CD4-positive, alpha-beta T cell (primary cell): ENCODE measurements at regions of chr5 and their contacts with region 1.

Region 1: GRCh38 chr5:170338933-170339779 is 41.6 kb upstream of the LCP2 start:
- DNase-seq: peak; percentile 49 to 88 (median 66)
- ATAC-seq: peak; percentile 81
- H3K4me3 ChIP-seq: no peak overlapping the region
- H3K4me3 Mint-ChIP-seq: no peak overlapping the region
- H3K27ac ChIP-seq: no peak overlapping the region
- H3K27ac Mint-ChIP-seq: no peak overlapping the region
- H3K4me1 ChIP-seq: peaks cover 50% of the 10 kb centered on the region
- H3K4me1 Mint-ChIP-seq: peaks cover 40% of the 10 kb centered on the region
- H3K27me3 ChIP-seq: no peaks in the 10 kb centered on the region
- H3K27me3 Mint-ChIP-seq: no peaks in the 10 kb centered on the region
- CTCF ChIP-seq: peak; percentile 98

Region 2: GRCh38 chr5:170100066-170100943 is 238.9 kb before region 1 on chr5:
- CTCF ChIA-PET with region 1: no interaction called
- POLR2A ChIA-PET with region 1: no interaction called
- intact Hi-C with region 1: loop called (anchors 1 to 2 kb)
- DNase-seq: peak; percentile 48 to 79 (median 60)
- ATAC-seq: peak; percentile 56
- H3K4me3 ChIP-seq: no peak overlapping the region
- H3K4me3 Mint-ChIP-seq: no peak overlapping the region
- H3K27ac ChIP-seq: no peak overlapping the region
- H3K27ac Mint-ChIP-seq: no peak overlapping the region
- H3K4me1 ChIP-seq: peaks cover 2% of the 10 kb centered on the region
- H3K4me1 Mint-ChIP-seq: no peaks in the 10 kb centered on the region
- H3K27me3 ChIP-seq: no peaks in the 10 kb centered on the region
- H3K27me3 Mint-ChIP-seq: peaks cover 20% of the 10 kb centered on the region
- CTCF ChIP-seq: peak; percentile 67

Region 3: GRCh38 chr5:170238456-170239196 is 100.5 kb before region 1 on chr5:
- CTCF ChIA-PET with region 1: interaction called, 10 read pairs
- POLR2A ChIA-PET with region 1: interaction called, 5 read pairs
- intact Hi-C with region 1: no loop called
- DNase-seq: no peak
- ATAC-seq: no peak
- H3K4me3 ChIP-seq: no peak overlapping the region
- H3K4me3 Mint-ChIP-seq: no peak overlapping the region
- H3K27ac ChIP-seq: no peak overlapping the region
- H3K27ac Mint-ChIP-seq: peak overlapping the region; percentile 1
- H3K4me1 ChIP-seq: no peaks in the 10 kb centered on the region
- H3K4me1 Mint-ChIP-seq: peaks cover 5% of the 10 kb centered on the region
- H3K27me3 ChIP-seq: no peaks in the 10 kb centered on the region
- H3K27me3 Mint-ChIP-seq: no peaks in the 10 kb centered on the region
- CTCF ChIP-seq: no peak

Region 4: GRCh38 chr5:170267431-170268152 is 71.6 kb before region 1 on chr5:
- CTCF ChIA-PET with region 1: interaction called, 73 read pairs
- POLR2A ChIA-PET with region 1: interaction called, 174 read pairs
- intact Hi-C with region 1: loop called in 1 of 2 experiments (anchors 1 kb)
- DNase-seq: peak; percentile 71 to 93 (median 78)
- ATAC-seq: peak; percentile 75
- H3K4me3 ChIP-seq: peak overlapping the region; percentile 8
- H3K4me3 Mint-ChIP-seq: peak overlapping the region; percentile 70
- H3K27ac ChIP-seq: peak overlapping the region; percentile 77 to 82
- H3K27ac Mint-ChIP-seq: peak overlapping the region; percentile 96
- H3K4me1 ChIP-seq: peaks cover 84% of the 10 kb centered on the region
- H3K4me1 Mint-ChIP-seq: peaks cover 93% of the 10 kb centered on the region
- H3K27me3 ChIP-seq: no peaks in the 10 kb centered on the region
- H3K27me3 Mint-ChIP-seq: no peaks in the 10 kb centered on the region
- CTCF ChIP-seq: peak; percentile 91

Region 5: DNA sequence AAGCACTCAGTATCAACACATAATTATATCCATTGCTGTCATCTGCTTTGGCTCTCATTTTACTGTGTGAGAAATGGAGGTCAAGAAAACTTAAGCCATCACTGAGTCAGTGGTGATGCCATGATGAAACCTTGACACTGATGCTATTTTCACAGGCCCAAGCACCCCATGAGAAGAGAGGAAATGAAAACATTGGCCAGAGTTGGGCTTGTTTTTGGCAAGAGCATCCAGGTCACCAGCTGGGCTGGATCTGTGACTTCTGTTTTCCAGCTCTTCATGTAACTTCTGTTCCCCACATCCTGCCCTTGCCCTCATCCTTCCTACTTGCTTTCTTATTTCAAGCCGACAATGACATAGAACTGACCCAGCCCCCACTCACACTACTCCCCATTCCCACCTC is 51.6 kb before region 1 on chr5:
- CTCF ChIA-PET with region 1: interaction called, 65 read pairs
- POLR2A ChIA-PET with region 1: interaction called, 236 read pairs
- intact Hi-C with region 1: no loop called
- DNase-seq: peak in 3 of 14 experiments; percentile 50 to 55 (median 51)
- ATAC-seq: no peak
- H3K4me3 ChIP-seq: no peak overlapping the region
- H3K4me3 Mint-ChIP-seq: peak overlapping the region; percentile 47
- H3K27ac ChIP-seq: peak overlapping the region; percentile 62 to 63
- H3K27ac Mint-ChIP-seq: peak overlapping the region; percentile 96
- H3K4me1 ChIP-seq: peaks cover 94% of the 10 kb centered on the region
- H3K4me1 Mint-ChIP-seq: peaks cover 100% of the 10 kb centered on the region
- H3K27me3 ChIP-seq: no peaks in the 10 kb centered on the region
- H3K27me3 Mint-ChIP-seq: no peaks in the 10 kb centered on the region
- CTCF ChIP-seq: no peak

Region 6: GRCh38 chr5:170302653-170303501 is 36.3 kb before region 1 on chr5:
- CTCF ChIA-PET with region 1: interaction called, 65 read pairs
- POLR2A ChIA-PET with region 1: interaction called, 236 read pairs
- intact Hi-C with region 1: no loop called
- DNase-seq: peak; percentile 36 to 96 (median 58)
- ATAC-seq: peak; percentile 95
- H3K4me3 ChIP-seq: peak overlapping the region; percentile 47
- H3K4me3 Mint-ChIP-seq: peak overlapping the region; percentile 87
- H3K27ac ChIP-seq: peak overlapping the region; percentile 88 to 92
- H3K27ac Mint-ChIP-seq: peak overlapping the region; percentile 96
- H3K4me1 ChIP-seq: peaks cover 82% of the 10 kb centered on the region
- H3K4me1 Mint-ChIP-seq: peaks cover 87% of the 10 kb centered on the region
- H3K27me3 ChIP-seq: no peaks in the 10 kb centered on the region
- H3K27me3 Mint-ChIP-seq: no peaks in the 10 kb centered on the region
- CTCF ChIP-seq: peak; percentile 27

Region 7: DNA sequence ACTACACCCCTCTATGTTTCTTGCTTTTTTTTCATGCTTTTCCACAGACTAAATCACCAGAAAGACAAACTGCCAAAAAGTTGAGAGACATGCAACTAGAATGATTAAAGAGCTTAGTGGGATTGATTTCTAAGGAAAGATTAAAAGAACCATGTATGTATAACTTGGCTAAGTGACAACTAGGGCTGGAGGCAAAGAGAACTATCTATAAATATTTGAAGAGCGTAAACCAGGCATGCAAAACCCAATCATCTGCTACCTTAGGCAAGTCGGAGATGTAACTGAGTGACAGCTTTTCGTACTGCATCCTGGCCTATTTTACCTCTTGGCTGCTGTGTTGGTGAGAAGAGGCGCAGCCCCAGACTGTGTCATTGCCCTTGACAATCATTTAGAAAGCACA is 848.9 kb after region 1 on chr5:
- CTCF ChIA-PET with region 1: no interaction called
- POLR2A ChIA-PET with region 1: no interaction called
- intact Hi-C with region 1: no loop called
- DNase-seq: no peak
- ATAC-seq: no peak
- H3K4me3 ChIP-seq: no peak overlapping the region
- H3K4me3 Mint-ChIP-seq: no peak overlapping the region
- H3K27ac ChIP-seq: no peak overlapping the region
- H3K27ac Mint-ChIP-seq: no peak overlapping the region
- H3K4me1 ChIP-seq: no peaks in the 10 kb centered on the region
- H3K4me1 Mint-ChIP-seq: no peaks in the 10 kb centered on the region
- H3K27me3 ChIP-seq: no peaks in the 10 kb centered on the region
- H3K27me3 Mint-ChIP-seq: peaks cover 30% of the 10 kb centered on the region
- CTCF ChIP-seq: no peak